Panc1 (cell line): ENCODE measurements at regions of chr7 and their contacts with region 1.

Region 1: GRCh38 chr7:3415861-3416312 is 114.8 kb downstream of the SDK1 start:
- DNase-seq: no peak
- ATAC-seq: no peak
- H3K4me3 ChIP-seq: no peak overlapping the region
- H3K27ac ChIP-seq: peak overlapping the region; percentile 4; the same call in 1 of the 2 replicates
- H3K4me1 ChIP-seq: peaks cover 36% of the 10 kb centered on the region
- H3K27me3 ChIP-seq: no peaks in the 10 kb centered on the region
- CTCF ChIP-seq: no peak

Region 2: GRCh38 chr7:3217166-3217565 is 198.7 kb before region 1 on chr7:
- CTCF ChIA-PET with region 1: interaction called, 11 read pairs
- POLR2A ChIA-PET with region 1: no interaction called
- in situ Hi-C with region 1: no loop called
- intact Hi-C with region 1: no loop called
- DNase-seq: no peak
- ATAC-seq: peak; percentile 44; the same call in 1 of the 2 replicates
- H3K4me3 ChIP-seq: no peak overlapping the region
- H3K27ac ChIP-seq: no peak overlapping the region
- H3K4me1 ChIP-seq: peaks cover 12% of the 10 kb centered on the region; the same call in 1 of the 2 replicates
- H3K27me3 ChIP-seq: no peaks in the 10 kb centered on the region
- CTCF ChIP-seq: no peak

Region 3: GRCh38 chr7:3393862-3394261 is 22.0 kb before region 1 on chr7:
- CTCF ChIA-PET with region 1: no interaction called
- POLR2A ChIA-PET with region 1: interaction called, 11 read pairs
- in situ Hi-C with region 1: no loop called
- intact Hi-C with region 1: no loop called
- DNase-seq: no peak
- ATAC-seq: peak; percentile 58; the same call in 1 of the 2 replicates
- H3K4me3 ChIP-seq: no peak overlapping the region
- H3K27ac ChIP-seq: no peak overlapping the region
- H3K4me1 ChIP-seq: no peaks in the 10 kb centered on the region
- H3K27me3 ChIP-seq: no peaks in the 10 kb centered on the region
- CTCF ChIP-seq: no peak; the same call in 1 of the 2 replicates